Activated naive CD4-positive, alpha-beta T cell treated with anti-CD3 and anti-CD28 coated beads for 36 hours (primary cell): ENCODE measurements at regions of chr3 and their contacts with region 1.

Region 1: GRCh38 chr3:168213920-168214319 is 118.2 kb upstream of the GOLIM4 start:
- DNase-seq: no peak
- H3K4me3 Mint-ChIP-seq: no peak overlapping the region
- H3K27ac Mint-ChIP-seq: no peak overlapping the region
- H3K4me1 Mint-ChIP-seq: no peaks in the 10 kb centered on the region
- H3K27me3 Mint-ChIP-seq: peaks cover 2% of the 10 kb centered on the region

Region 2: GRCh38 chr3:168467115-168467714 is 253.3 kb after region 1 on chr3:
- CTCF ChIA-PET with region 1: no interaction called
- intact Hi-C with region 1: loop called (anchors 5 kb)
- DNase-seq: no peak
- H3K4me3 Mint-ChIP-seq: no peak overlapping the region
- H3K27ac Mint-ChIP-seq: no peak overlapping the region
- H3K4me1 Mint-ChIP-seq: no peaks in the 10 kb centered on the region
- H3K27me3 Mint-ChIP-seq: no peaks in the 10 kb centered on the region

Region 3: DNA sequence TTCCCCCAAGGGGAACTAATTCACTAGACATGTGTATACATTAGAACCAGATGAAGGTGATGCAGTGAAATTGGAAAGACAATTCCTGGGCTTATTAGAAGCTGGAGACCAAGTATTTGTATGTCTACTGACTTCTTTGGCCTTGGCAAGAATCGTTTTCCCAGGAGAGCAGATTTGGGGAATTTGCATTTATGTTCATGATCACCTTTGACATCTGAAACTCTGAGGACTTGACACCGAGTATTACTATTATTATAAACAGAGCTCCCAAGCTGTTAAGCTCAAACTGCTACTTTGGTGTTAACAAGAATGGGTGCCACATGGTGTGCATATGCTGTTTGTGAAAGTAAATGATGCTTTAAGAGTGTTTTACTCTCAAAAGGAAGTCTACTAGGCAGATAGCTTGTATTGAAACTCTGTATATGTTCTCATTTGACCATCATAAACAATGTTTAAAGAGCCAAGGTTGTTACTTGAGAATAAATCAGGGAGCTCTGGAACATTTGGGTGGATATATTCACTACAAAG is 401.6 kb after region 1 on chr3:
- CTCF ChIA-PET with region 1: interaction called, 3 read pairs
- intact Hi-C with region 1: loop called (anchors 10 kb)
- DNase-seq: no peak
- H3K4me3 Mint-ChIP-seq: no peak overlapping the region
- H3K27ac Mint-ChIP-seq: no peak overlapping the region
- H3K4me1 Mint-ChIP-seq: no peaks in the 10 kb centered on the region
- H3K27me3 Mint-ChIP-seq: no peaks in the 10 kb centered on the region

Region 4: DNA sequence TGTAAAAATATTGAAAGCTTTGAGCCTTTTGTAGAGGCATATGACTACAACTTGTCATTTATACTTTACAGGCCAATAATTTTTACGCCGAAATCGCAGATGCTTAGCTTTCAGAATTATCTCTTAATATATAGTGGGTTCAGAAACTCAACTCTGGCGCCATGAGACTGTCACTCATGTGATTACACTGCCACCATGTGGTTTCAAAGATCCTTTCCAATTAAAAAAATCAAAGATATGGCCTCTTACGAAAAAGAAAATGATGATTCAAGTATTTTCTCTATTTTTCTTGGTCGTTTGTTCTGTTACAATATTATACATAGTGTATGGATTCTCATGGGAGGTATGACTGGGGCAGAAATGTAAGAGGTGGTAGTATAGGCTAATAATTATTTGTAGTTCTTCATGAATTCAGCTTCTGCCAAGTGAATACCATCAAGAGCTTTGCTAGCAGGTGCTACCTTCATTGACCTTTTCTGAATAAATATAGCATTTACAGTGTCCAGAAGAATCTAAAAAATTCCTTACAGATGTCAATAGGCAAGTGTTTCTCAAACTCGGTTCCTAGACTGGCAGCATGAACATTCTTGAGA is 633.5 kb after region 1 on chr3:
- CTCF ChIA-PET with region 1: interaction called, 15 read pairs
- intact Hi-C with region 1: loop called (anchors 1 kb)
- DNase-seq: no peak
- H3K4me3 Mint-ChIP-seq: no peak overlapping the region
- H3K27ac Mint-ChIP-seq: no peak overlapping the region
- H3K4me1 Mint-ChIP-seq: no peaks in the 10 kb centered on the region
- H3K27me3 Mint-ChIP-seq: peaks cover 3% of the 10 kb centered on the region

Region 5: DNA sequence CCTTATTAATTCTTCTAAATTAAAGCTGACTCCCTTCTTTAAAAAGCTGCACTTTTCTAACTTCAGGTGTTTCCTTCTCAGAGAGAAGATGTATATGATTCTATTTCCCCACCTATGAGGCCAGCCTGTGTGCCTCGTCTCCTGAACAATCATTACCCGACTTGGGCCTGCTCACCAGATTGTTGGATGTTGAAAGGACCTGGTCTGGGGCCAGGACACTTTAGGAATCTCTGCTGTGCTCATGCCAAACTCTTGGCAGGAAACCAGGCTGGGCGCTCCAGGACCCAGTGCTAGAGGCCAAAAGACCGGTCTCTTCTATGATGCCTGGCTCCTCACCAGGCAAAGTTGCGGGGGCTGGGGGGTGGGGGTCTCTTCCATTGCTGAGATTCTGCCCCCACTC is 1672.8 kb after region 1 on chr3:
- CTCF ChIA-PET with region 1: no interaction called
- intact Hi-C with region 1: no loop called
- DNase-seq: no peak
- H3K4me3 Mint-ChIP-seq: no peak overlapping the region
- H3K27ac Mint-ChIP-seq: no peak overlapping the region
- H3K4me1 Mint-ChIP-seq: no peaks in the 10 kb centered on the region
- H3K27me3 Mint-ChIP-seq: no peaks in the 10 kb centered on the region